ENCODE measurements at regions of chr14 and their contacts with region 1.

Region 1: GRCh38 chr14:90256354-90257131 is at the start of gene PSMC1:
- DNase-seq: peak; percentile 92
- ATAC-seq: peak; percentile 97
- H3K4me3 Mint-ChIP-seq: peak within 1 kb of the TSS; percentile 93
- H3K27ac Mint-ChIP-seq: peak within 1 kb of the TSS; percentile 95
- H3K4me1 Mint-ChIP-seq: peaks cover 26% of the 10 kb centered on the region
- H3K27me3 Mint-ChIP-seq: peaks cover 4% of the 10 kb centered on the region
- total RNA-seq, gene PSMC1: 83.5 to 88.9 TPM

Region 2: GRCh38 chr14:89954070-89955028 is 302.2 kb before region 1 on chr14 and contains the start of gene EFCAB11:
- CTCF ChIA-PET with region 1: interaction called, 3 read pairs
- POLR2A ChIA-PET with region 1: interaction called, 13 read pairs
- DNase-seq: peak; percentile 98
- ATAC-seq: peak; percentile 85
- H3K4me3 Mint-ChIP-seq: peak within 1 kb of the TSS; percentile 99
- H3K27ac Mint-ChIP-seq: peak within 1 kb of the TSS; percentile 96
- H3K4me1 Mint-ChIP-seq: peaks cover 40% of the 10 kb centered on the region
- H3K27me3 Mint-ChIP-seq: no peaks in the 10 kb centered on the region
- total RNA-seq, gene EFCAB11: 9.8 to 11.9 TPM

Region 3: GRCh38 chr14:90154110-90154509 is 102.4 kb before region 1 on chr14:
- CTCF ChIA-PET with region 1: no interaction called
- POLR2A ChIA-PET with region 1: no interaction called
- DNase-seq: no peak
- ATAC-seq: no peak
- H3K4me3 Mint-ChIP-seq: no peak overlapping the region
- H3K27ac Mint-ChIP-seq: no peak overlapping the region
- H3K4me1 Mint-ChIP-seq: no peaks in the 10 kb centered on the region
- H3K27me3 Mint-ChIP-seq: no peaks in the 10 kb centered on the region

Region 4: GRCh38 chr14:90235179-90235976 is 21.2 kb before region 1 on chr14:
- CTCF ChIA-PET with region 1: interaction called, 10 read pairs
- POLR2A ChIA-PET with region 1: no interaction called
- DNase-seq: peak; percentile 77
- ATAC-seq: peak; percentile 81
- H3K4me3 Mint-ChIP-seq: no peak overlapping the region
- H3K27ac Mint-ChIP-seq: no peak overlapping the region
- H3K4me1 Mint-ChIP-seq: peaks cover 3% of the 10 kb centered on the region
- H3K27me3 Mint-ChIP-seq: peaks cover 11% of the 10 kb centered on the region

Measured in activated CD8-positive, alpha-beta T cell treated with anti-CD3 and anti-CD28 coated beads, Interleukin-2, amount 10 ng/mL, durations not matched to agents 7 days and 5 days (primary cell).